ENCODE measurements at regions of chr22 and their contacts with region 1.

Region 1: DNA sequence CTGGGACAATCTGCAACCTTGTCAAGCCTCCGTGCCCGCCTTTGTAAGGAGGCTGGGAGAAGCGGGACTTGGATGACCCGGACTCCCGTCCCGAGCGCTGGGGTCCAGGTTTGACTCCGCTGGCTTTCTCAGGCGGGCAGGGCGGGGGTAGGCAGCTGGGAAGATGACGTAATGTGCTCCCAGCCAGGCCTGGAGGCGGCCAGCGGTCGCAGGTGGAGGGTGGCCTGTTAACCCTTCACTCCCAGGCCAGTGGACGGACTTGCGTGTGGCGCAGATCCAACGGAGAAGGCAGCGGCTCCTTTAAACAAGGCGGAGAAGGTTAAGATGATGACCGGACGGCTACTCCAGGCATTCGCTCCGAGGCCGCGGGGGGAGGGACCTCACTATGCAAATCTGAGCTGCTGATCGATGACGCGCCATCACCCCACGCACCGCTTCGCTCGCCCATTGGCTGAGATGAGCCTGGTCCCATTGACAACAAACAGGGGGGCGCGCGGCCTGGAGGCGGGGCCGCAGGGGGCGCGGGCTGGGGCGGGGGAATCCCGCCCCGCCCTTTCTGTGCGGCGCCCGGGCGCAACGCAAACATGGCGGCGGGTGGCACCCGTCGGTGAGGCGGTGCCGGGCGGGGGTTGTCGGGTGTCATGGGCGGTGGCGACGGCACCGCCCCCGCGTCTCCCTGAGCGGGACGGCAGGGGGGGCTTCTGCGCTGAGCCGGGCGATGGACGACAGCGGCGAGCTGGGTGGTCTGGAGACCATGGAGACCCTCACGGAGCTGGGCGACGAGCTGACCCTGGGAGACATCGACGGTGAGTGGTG is at the start of gene SREBF2:
- DNase-seq: peak; percentile 99
- H3K4me3 ChIP-seq: peak within 1 kb of the TSS; percentile 75
- CTCF ChIP-seq: no peak

Region 2: GRCh38 chr22:41417622-41418390 is 415.0 kb before region 1 on chr22:
- in situ Hi-C with region 1: no loop called
- DNase-seq: no peak
- H3K4me3 ChIP-seq: no peak overlapping the region
- CTCF ChIP-seq: no peak

Region 3: GRCh38 chr22:41915035-41915785 is 82.4 kb after region 1 on chr22 and contains the start of gene SHISA8:
- in situ Hi-C with region 1: no loop called
- DNase-seq: no peak
- H3K4me3 ChIP-seq: no peak within 1 kb of the TSS
- CTCF ChIP-seq: no peak

Region 4: DNA sequence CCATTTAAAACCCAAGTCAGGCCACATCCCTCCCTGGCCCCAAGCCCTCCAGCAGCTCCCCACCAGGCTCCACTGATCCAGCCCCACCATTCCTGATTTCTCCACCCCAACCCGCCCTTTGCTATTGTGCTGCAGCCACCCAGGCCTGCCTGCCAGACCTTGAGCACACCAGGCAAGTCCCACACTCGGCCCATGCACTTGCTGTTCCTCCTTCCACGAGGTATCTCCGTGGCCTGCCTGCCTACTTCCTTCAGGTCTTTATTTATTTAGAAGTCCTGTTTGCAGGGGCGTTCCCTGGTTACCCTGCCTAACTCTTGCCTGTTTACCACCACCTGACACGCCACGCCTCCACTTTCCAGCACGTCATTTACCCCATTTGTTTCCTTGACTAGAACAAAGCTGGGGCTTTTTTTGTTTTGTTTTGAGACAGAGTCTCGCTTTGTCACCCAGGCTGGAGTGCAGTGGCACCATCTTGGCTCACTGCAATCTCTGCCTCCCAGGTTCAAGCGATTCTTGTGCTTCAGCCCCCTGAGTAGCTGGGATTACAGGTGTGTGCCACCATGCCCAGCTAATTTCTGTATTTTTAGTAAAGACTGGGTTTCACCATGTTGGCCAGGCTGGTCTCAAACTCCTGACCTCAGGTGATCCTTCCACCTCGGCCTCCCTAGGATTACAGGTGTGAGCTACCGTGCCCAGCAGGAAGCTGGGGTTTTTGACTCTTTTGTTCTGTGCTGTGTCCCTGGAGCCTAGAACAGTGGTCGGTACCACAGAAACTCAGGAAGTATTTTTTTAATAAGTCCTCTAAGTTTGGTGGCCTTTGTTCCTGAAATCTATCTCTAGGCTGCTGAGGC is 107.4 kb after region 1 on chr22:
- in situ Hi-C with region 1: loop called (anchors 10 kb)
- DNase-seq: no peak
- H3K4me3 ChIP-seq: no peak overlapping the region
- CTCF ChIP-seq: no peak

Region 5: GRCh38 chr22:42090596-42091454 is 258.1 kb after region 1 on chr22 and contains the start of gene NDUFA6:
- in situ Hi-C with region 1: no loop called
- DNase-seq: peak; percentile 98
- H3K4me3 ChIP-seq: peak within 1 kb of the TSS; percentile 94
- CTCF ChIP-seq: peak; percentile 90